AG04449 (cell line): ENCODE measurements at regions of chr19 and their contacts with region 1.

Region 1: GRCh38 chr19:47436712-47437401 is 17.5 kb upstream of the MEIS3 start:
- DNase-seq: no peak
- H3K4me3 ChIP-seq: no peak overlapping the region
- CTCF ChIP-seq: peak; percentile 87

Region 2: DNA sequence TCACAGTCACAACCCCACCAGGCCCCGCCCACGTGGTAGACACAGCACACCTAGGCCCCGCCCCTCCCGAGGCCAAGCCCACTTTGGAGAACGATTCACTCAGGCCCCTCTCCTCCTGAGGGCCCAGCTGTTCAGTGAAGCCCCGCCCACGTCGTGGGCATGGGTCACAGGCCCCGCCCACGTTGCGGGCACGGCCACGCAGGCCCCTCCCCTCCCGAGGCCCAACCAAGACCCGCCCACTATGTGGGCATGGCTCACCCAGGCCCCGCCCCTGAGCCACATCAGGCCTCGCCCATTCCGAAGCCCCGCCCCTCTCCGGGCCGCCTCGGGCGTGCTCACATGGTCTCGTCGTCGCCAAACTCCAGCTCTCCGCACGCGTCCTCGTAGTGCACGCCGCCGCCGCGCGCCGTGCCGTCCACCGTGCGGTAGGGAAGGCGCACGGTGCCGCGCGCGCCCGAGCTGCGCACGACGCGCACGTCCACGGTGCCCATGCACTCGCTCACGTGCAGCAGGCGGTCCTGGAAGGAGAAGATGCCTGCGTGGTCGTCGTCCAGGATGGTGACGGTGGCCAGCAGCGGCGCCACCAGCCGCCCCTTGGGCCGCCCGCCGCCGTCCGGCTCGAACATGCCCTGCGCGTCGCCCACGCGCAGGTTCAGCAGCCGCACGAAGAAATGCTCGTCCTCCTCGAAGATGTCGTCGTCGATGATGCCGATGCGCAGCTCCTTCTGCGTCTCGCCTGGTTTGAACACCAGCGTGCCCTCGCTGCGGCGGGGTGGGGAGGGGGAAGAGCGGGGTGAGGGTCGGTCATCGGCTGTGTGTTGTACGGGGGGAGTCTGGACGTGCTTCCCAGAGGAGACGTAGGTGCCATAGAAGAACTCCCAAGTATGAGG is 10.9 kb after region 1 on chr19:
- CTCF ChIA-PET with region 1: interaction called, 61 read pairs
- POLR2A ChIA-PET with region 1: no interaction called
- DNase-seq: no peak
- H3K4me3 ChIP-seq: peak overlapping the region; percentile 20; the same call in 1 of the 2 replicates
- CTCF ChIP-seq: no peak

Region 3: DNA sequence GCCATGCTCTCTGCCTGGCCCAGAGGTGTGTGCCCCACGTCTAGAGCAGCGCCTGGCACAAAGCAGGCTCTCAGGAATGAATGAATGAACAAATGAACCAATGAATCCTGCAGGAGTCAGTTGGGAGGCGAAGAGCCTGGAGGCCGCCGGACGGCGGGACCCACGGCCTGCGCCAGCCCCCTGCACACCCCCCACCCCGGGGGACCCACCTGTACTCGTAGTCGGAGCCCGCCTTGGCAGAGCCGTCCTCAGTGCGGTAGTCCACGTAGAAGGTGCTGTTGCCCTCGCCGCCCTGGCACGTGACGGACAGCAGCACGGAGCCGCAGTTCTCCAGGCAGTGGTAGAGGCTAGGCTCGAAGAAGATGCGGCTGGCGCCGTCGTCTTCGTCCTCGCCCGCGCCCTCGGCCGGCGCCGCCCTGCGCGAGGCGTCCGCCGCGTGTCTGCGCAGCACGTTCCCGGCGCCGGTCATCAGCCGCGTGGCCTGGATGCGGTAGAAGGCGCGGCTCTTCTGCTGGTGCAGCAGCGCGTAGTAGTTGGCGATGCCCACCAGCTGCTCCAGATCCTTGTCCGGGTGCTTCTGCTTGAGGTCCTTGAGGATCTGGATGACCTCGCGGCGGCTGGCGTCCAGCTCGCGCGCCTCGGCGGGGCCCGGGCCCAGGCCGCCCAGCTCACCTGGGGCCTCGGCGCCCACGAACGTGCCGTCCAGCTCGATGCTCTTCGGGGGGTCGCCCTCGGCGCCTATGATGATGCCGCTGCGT is 20.0 kb after region 1 on chr19:
- CTCF ChIA-PET with region 1: interaction called, 10 read pairs
- POLR2A ChIA-PET with region 1: no interaction called
- DNase-seq: no peak
- H3K4me3 ChIP-seq: no peak overlapping the region
- CTCF ChIP-seq: no peak

Region 4: DNA sequence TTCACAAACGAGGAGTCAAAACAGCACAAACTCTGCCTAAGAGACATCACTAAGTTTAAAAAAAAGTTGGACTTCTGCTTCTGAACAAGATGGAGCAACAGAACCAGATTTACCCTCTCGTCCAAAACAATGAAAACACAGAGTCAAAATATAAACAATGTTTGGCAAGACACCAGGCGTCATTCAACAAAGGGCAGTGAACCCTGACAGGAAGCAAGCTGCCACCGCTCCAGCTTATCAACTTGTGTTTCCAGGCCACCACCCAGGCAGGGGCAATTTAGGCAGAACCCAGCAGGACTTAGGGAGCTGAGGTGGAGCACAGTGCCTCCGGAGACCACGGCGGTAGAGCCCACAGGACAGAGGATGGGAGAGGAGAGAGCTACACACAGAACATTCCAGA is 86.6 kb after region 1 on chr19:
- CTCF ChIA-PET with region 1: interaction called, 17 read pairs
- POLR2A ChIA-PET with region 1: no interaction called
- DNase-seq: no peak
- H3K4me3 ChIP-seq: no peak overlapping the region
- CTCF ChIP-seq: no peak

Region 5: DNA sequence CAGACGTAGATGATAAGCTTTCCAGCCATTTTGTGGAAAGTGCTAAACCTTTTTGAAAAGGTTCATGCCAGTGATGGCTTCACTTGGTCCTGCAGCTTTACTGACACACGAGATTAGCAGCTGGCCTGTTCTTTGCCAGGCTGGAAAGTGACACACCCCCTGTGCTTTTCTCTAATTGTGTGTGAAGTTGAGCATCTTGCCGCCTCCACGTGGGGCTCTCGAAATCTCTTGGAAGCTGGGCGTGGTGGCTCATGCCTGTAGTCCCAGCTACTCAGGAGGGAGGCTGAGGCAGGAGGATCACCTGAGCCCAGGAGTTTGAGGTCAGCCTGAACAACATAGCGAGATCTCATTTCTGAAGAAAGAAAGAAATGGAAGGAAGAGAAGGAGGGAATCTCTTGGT is 251.0 kb after region 1 on chr19:
- CTCF ChIA-PET with region 1: interaction called, 24 read pairs
- POLR2A ChIA-PET with region 1: no interaction called
- DNase-seq: no peak
- H3K4me3 ChIP-seq: no peak overlapping the region
- CTCF ChIP-seq: no peak